ENCODE measurements at regions of chr3 and their contacts with region 1.

Region 1: DNA sequence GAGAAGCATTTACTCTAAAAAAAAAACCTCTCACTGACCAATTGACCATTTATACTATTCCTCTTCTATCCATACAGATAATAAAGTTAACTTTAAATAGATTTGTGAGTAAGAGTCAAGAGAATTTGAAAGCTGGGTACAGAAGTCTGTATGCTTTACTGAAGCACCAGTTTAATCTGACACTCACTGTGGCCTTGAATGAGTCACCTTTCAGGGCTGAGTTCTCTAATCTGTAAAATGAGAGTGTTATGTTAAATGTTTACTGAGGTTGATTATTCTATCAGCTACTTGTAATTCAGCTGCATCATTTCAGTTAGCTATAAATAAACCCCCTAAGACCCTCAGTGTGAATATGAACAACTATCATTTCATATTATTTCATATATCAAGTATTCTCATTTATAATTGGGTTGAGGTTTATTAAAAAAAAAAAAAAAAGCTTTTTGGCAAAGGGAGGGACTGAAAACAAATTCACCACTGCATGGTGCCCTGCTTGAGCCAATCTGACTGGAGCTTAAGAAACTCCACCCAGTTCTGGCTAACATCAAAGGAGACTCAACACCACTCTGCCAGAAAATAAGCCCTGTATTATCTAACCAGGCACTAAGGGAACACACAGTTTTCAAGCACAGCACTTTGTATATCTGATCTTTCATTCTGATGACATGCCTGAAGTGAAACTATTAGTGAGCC is 2.8 kb downstream of the MAP4 start:
- DNase-seq: peak; percentile 61 to 81
- ATAC-seq: peak; percentile 86
- H3K4me3 ChIP-seq: peak overlapping the region; percentile 43 to 66 (median 56)
- H3K27ac ChIP-seq: peak overlapping the region; percentile 90 to 96 (median 92)
- H3K4me1 ChIP-seq: peaks cover 70 to 84% of the 10 kb centered on the region in 2 donors
- H3K27me3 ChIP-seq: no peaks in the 10 kb centered on the region
- CTCF ChIP-seq: no peak
- POLR2A ChIP-seq: peak in 1 of 2 donors; percentile 88

Region 2: GRCh38 chr3:47176582-47176981 is 836.9 kb before region 1 on chr3:
- in situ Hi-C with region 1: no loop called
- intact Hi-C with region 1: no loop called
- DNase-seq: no peak
- ATAC-seq: no peak
- H3K4me3 ChIP-seq: no peak overlapping the region
- H3K27ac ChIP-seq: no peak overlapping the region
- H3K4me1 ChIP-seq: no peaks in the 10 kb centered on the region
- H3K27me3 ChIP-seq: no peaks in the 10 kb centered on the region
- CTCF ChIP-seq: no peak
- POLR2A ChIP-seq: no peak

Region 3: DNA sequence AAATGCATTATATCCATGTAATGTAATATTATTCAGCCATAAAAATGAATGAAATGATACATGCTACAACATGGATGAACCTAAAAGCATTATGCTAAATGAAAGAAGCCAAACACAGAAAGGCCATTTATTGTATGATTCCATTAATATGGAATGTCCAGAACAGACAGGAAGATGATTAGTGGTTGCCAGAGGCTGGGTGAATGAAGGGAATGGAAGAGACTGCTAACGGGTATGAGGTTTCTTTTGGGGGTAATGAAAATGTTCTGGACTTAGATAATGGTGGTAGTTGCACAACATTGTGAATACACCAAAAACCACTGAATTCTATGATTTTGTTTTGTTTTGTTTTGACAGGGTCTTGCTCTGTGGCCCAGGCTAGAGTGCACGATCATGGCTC is 64.4 kb after region 1 on chr3:
- in situ Hi-C with region 1: loop called in 1 of 4 experiments (anchors 10 kb)
- intact Hi-C with region 1: no loop called
- DNase-seq: no peak
- ATAC-seq: no peak
- H3K4me3 ChIP-seq: no peak overlapping the region
- H3K27ac ChIP-seq: no peak overlapping the region
- H3K4me1 ChIP-seq: peaks cover 24 to 32% of the 10 kb centered on the region in 2 donors
- H3K27me3 ChIP-seq: no peaks in the 10 kb centered on the region
- CTCF ChIP-seq: no peak
- POLR2A ChIP-seq: no peak